ENCODE measurements at regions of chr1 and their contacts with region 1.

Region 1: GRCh38 chr1:204989266-204990058 is 53.5 kb upstream of the CNTN2 start:
- DNase-seq: peak; percentile 66
- ATAC-seq: peak; percentile 81 to 85

Region 2: DNA sequence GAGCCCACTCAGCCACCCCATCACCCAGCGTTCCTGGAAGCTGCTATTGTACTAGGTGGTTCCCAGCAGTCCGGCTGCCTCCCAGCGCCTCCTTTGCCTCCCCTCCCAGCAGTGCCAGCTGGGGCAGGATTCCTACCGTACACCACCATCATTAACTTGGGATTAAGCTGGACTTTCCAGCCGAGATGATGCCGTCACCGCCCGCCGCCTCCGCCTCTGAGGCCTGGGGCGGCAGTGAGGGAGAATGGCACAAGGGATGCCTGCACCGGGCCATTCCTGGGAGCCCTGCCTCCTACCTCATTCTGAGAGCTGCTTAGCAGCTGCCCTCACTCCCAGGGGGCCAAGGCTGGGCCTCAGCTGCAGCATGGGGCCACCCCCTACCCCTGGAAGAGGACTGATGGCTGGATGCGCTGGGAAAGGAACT is 66.7 kb after region 1 on chr1:
- intact Hi-C with region 1: loop called (anchors 2 to 5 kb)
- DNase-seq: no peak
- ATAC-seq: no peak

Region 3: GRCh38 chr1:205061665-205062069 is 72.2 kb after region 1 on chr1:
- intact Hi-C with region 1: loop called (anchors 2 to 5 kb)
- DNase-seq: peak; percentile 69
- ATAC-seq: peak; percentile 76 to 79

Region 4: GRCh38 chr1:205211169-205211838 is 221.8 kb after region 1 on chr1 and contains the start of gene DSTYK:
- intact Hi-C with region 1: no loop called
- DNase-seq: peak; percentile 94
- ATAC-seq: peak; percentile 96 to 97
- total RNA-seq, gene DSTYK: 8.1 to 8.2 TPM